ENCODE measurements at regions of chr10 and their contacts with region 1.

Region 1: GRCh38 chr10:72557362-72557761 is 68.5 kb downstream of the MICU1 start:
- DNase-seq: no peak
- H3K4me3 ChIP-seq: no peak overlapping the region
- H3K27ac ChIP-seq: no peak overlapping the region
- H3K4me1 ChIP-seq: peaks cover 4% of the 10 kb centered on the region; the same call in 1 of the 2 replicates
- H3K27me3 ChIP-seq: no peaks in the 10 kb centered on the region
- CTCF ChIP-seq: no peak

Region 2: GRCh38 chr10:71378336-71379117 is 1178.8 kb before region 1 on chr10:
- CTCF ChIA-PET with region 1: no interaction called
- POLR2A ChIA-PET with region 1: no interaction called
- intact Hi-C with region 1: no loop called
- DNase-seq: peak in 1 of 2 experiments; percentile 48
- H3K4me3 ChIP-seq: no peak overlapping the region
- H3K27ac ChIP-seq: 0 out of 2 replicates have a peak overlapping the region, but pooled peaks have one; percentile 75
- H3K4me1 ChIP-seq: peaks cover 39% of the 10 kb centered on the region
- H3K27me3 ChIP-seq: no peaks in the 10 kb centered on the region
- CTCF ChIP-seq: no peak

Region 3: GRCh38 chr10:72490951-72491350 is 66.4 kb before region 1 on chr10:
- CTCF ChIA-PET with region 1: interaction called, 13 read pairs
- POLR2A ChIA-PET with region 1: no interaction called
- intact Hi-C with region 1: no loop called
- DNase-seq: no peak
- H3K4me3 ChIP-seq: no peak overlapping the region
- H3K27ac ChIP-seq: no peak overlapping the region
- H3K4me1 ChIP-seq: no peaks in the 10 kb centered on the region
- H3K27me3 ChIP-seq: no peaks in the 10 kb centered on the region
- CTCF ChIP-seq: no peak